ENCODE measurements at regions of chr1 and their contacts with region 1.

Region 1: DNA sequence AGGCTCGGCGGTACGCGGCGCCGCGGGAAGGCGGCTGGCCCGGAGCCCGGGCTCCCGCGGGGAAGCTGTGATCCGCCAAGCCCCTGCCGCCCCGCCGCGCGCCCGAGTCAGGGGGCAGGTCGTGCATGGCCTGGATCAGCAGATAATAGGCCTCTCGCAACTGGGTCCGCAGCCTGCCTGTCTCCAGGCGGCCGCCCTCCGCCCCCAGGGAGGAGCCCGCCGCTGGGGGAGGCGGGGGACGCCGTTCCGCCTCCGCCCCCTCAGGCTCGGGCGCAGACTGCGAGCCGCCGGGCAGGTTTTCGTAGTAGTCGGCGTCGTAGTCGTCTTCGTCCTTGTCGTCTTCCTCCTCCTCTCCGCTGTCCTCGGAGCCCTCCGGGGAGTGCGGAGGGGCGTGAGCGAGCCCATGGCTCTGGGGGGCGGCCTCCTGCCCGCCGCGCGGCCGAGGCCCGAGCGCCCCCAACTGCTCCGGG is at the start of gene SYDE2:
- DNase-seq: peak; percentile 76
- H3K4me3 Mint-ChIP-seq: peak within 1 kb of the TSS; percentile 97
- H3K27ac Mint-ChIP-seq: peak within 1 kb of the TSS; percentile 89
- H3K4me1 Mint-ChIP-seq: peaks cover 26% of the 10 kb centered on the region
- H3K27me3 Mint-ChIP-seq: peaks cover 5% of the 10 kb centered on the region
- total RNA-seq, gene SYDE2: 2.7 to 2.8 TPM

Region 2: DNA sequence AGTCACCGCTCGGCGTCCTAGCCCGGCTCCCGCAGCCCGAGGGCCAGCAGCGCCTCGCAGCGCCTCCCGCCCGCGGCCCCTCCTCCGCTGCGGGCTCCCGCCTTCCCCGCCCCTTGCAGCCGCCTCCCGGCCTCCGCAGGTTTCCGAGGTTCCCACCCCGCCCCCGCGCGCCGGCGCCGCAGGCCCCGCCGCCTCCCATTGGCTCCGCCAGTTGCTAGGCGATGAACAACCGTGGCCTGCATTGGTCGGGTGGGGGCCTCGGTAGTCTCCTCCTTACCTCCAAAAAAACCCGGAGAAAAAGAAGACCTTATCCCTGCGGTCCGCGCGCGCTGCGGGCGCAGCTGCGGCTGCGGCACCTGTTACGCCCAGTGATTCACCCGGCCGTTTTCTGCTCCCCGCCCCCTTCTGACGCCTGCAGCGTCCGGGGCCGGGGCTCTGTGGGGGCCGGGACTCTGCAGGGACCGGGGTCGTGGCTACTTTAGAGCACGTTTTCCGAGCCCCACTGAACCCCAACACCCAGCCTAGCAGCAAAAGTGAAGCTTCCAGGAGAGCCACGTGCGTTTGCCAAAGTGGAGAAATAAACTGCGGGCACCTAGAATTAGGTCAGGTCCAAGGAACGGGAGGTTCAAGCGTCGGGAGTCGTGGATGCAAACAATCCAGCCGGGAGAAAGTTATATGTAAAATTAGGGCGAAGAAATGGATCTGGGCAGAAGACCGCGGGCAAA is 510.3 kb before region 1 on chr1 and contains the start of gene SSX2IP:
- CTCF ChIA-PET with region 1: no interaction called
- POLR2A ChIA-PET with region 1: no interaction called
- intact Hi-C with region 1: loop called (anchors 5 kb)
- DNase-seq: peak; percentile 99
- H3K4me3 Mint-ChIP-seq: peak within 1 kb of the TSS; percentile 94
- H3K27ac Mint-ChIP-seq: peak within 1 kb of the TSS; percentile 80
- H3K4me1 Mint-ChIP-seq: peaks cover 53% of the 10 kb centered on the region
- H3K27me3 Mint-ChIP-seq: peaks cover 2% of the 10 kb centered on the region
- total RNA-seq, gene SSX2IP: 10.9 to 11.6 TPM

Region 3: GRCh38 chr1:85148524-85149250 is 52.2 kb before region 1 on chr1:
- CTCF ChIA-PET with region 1: no interaction called
- POLR2A ChIA-PET with region 1: no interaction called
- intact Hi-C with region 1: no loop called
- DNase-seq: peak; percentile 24
- H3K4me3 Mint-ChIP-seq: no peak overlapping the region
- H3K27ac Mint-ChIP-seq: peak overlapping the region; percentile 24
- H3K4me1 Mint-ChIP-seq: peaks cover 13% of the 10 kb centered on the region
- H3K27me3 Mint-ChIP-seq: peaks cover 2% of the 10 kb centered on the region

Region 4: DNA sequence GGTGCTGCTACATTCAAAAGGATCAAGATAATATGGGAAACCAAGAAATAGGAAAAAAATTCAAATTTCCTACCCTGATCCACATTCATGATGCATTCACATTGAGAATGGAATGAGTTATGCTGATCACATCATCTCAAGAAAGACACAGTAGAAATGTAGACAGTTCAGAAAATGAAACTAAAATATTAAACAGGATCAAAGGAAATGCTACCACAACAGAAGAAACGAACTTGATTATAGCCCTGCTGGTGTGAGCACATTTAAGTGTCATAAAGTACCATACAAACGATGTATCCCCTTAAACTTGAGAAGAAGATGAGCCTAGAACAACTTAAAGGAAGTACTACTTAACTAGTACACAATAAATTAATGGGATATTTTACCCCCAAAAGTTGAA is 21.4 kb before region 1 on chr1:
- CTCF ChIA-PET with region 1: no interaction called
- POLR2A ChIA-PET with region 1: no interaction called
- intact Hi-C with region 1: loop called (anchors 2 kb)
- DNase-seq: no peak
- H3K4me3 Mint-ChIP-seq: no peak overlapping the region
- H3K27ac Mint-ChIP-seq: no peak overlapping the region
- H3K4me1 Mint-ChIP-seq: peaks cover 12% of the 10 kb centered on the region
- H3K27me3 Mint-ChIP-seq: no peaks in the 10 kb centered on the region

Region 5: DNA sequence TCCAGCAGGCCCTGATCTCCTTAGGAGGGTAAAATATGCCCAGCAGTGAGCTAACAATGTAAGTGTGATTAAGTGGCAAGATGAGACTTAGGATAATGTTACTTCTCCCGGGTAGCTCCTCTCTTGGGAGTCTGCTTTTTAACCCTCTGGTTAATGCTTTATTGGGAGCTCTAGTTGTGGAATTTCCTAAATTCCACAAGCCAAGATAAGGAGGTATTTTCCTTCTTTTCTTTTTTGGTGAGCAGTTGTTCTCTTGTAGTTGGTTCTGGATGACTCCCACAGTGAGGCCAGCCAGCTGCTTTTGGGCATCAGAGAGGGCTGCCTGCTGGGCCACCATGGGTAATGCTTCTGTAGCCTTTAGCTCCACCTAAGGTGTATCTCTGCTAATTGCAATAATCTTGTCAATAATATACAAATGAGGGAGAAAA is 39.3 kb after region 1 on chr1:
- CTCF ChIA-PET with region 1: interaction called, 3 read pairs
- POLR2A ChIA-PET with region 1: no interaction called
- intact Hi-C with region 1: loop called (anchors 5 kb)
- DNase-seq: peak; percentile 34
- H3K4me3 Mint-ChIP-seq: no peak overlapping the region
- H3K27ac Mint-ChIP-seq: no peak overlapping the region
- H3K4me1 Mint-ChIP-seq: peaks cover 9% of the 10 kb centered on the region
- H3K27me3 Mint-ChIP-seq: peaks cover 4% of the 10 kb centered on the region

Region 6: GRCh38 chr1:85268801-85269585 is 68.1 kb after region 1 on chr1:
- CTCF ChIA-PET with region 1: no interaction called
- POLR2A ChIA-PET with region 1: no interaction called
- intact Hi-C with region 1: no loop called
- DNase-seq: no peak
- H3K4me3 Mint-ChIP-seq: no peak overlapping the region
- H3K27ac Mint-ChIP-seq: no peak overlapping the region
- H3K4me1 Mint-ChIP-seq: peaks cover 34% of the 10 kb centered on the region
- H3K27me3 Mint-ChIP-seq: no peaks in the 10 kb centered on the region

Measured in activated CD4-positive, alpha-beta memory T cell treated with anti-CD3 and anti-CD28 coated beads for 36 hours (primary cell).